WTC11 (cell line): ENCODE measurements at regions of chr10 and their contacts with region 1.

Region 1: GRCh38 chr10:109773288-109774120 is 149.8 kb downstream of the XPNPEP1 start:
- DNase-seq: no peak
- ATAC-seq: peak; percentile 91
- H3K4me3 Mint-ChIP-seq: no peak overlapping the region
- H3K27ac Mint-ChIP-seq: no peak overlapping the region
- H3K4me1 Mint-ChIP-seq: peaks cover 2% of the 10 kb centered on the region
- H3K27me3 Mint-ChIP-seq: no peaks in the 10 kb centered on the region
- CTCF ChIP-seq: peak; percentile 56

Region 2: DNA sequence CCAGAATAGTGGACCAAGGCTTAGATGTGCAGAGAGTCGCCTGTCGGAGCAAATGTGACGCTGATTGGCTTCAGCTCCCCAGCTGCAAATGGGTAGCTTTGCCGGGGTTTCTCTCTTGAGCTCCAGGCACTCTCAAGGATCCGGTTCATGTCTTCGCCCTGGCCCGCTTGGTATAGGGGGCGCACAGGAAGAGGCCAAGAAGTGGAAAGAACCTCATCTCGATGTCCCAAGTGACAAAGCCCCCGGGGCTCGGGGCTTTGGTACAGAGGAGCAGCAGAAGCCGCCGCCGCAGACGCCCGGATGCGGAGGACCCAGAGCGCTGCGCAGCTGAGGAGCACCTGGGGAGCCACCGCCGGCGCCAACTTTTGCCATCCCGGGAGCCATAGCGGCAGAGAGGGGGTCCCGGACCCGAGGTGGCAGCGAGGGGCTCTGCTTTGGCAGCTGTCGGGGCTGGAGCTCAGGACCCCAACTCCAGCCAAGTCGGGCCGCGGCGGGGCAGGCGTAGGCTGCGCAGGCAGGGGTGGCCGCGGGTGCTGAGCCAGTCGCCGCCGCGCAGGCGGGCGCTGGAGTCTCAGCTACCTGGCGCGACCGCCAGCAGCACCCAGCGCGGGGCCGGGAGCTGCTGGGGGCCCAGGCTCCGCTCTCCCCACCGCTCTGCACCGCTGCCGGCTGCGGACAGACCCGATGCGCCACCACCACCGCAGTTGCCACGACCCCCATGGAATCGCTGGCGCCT is 316.8 kb before region 1 on chr10:
- CTCF ChIA-PET with region 1: interaction called, 14 read pairs
- POLR2A ChIA-PET with region 1: no interaction called
- DNase-seq: peak; percentile 59
- ATAC-seq: peak; percentile 82
- H3K4me3 Mint-ChIP-seq: peak overlapping the region; percentile 75
- H3K27ac Mint-ChIP-seq: no peak overlapping the region
- H3K4me1 Mint-ChIP-seq: peaks cover 31% of the 10 kb centered on the region
- H3K27me3 Mint-ChIP-seq: peaks cover 62% of the 10 kb centered on the region
- CTCF ChIP-seq: no peak

Region 3: DNA sequence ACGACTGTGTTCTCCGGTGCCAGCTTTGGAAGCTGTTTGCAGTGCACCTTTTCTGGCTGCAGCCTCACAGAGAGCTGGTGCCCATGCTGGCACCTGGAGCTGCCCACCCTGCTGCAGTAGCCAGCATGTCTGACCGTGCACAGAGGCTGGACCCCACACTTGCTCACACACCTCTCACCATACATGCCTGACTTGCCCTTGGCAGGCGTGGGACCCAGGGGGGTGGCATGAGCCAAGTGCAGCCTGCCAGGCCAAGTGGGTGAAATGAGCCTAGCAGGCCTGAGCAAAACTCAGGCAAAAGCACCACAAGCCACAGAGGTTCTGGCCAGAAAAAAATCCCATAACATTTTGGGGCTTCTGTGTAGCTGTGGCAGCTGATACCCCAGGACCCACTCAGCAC is 109.0 kb before region 1 on chr10:
- CTCF ChIA-PET with region 1: interaction called, 11 read pairs
- POLR2A ChIA-PET with region 1: no interaction called
- DNase-seq: no peak
- ATAC-seq: no peak
- H3K4me3 Mint-ChIP-seq: no peak overlapping the region
- H3K27ac Mint-ChIP-seq: no peak overlapping the region
- H3K4me1 Mint-ChIP-seq: no peaks in the 10 kb centered on the region
- H3K27me3 Mint-ChIP-seq: no peaks in the 10 kb centered on the region; the same call in 1 of the 2 replicates
- CTCF ChIP-seq: no peak

Region 4: DNA sequence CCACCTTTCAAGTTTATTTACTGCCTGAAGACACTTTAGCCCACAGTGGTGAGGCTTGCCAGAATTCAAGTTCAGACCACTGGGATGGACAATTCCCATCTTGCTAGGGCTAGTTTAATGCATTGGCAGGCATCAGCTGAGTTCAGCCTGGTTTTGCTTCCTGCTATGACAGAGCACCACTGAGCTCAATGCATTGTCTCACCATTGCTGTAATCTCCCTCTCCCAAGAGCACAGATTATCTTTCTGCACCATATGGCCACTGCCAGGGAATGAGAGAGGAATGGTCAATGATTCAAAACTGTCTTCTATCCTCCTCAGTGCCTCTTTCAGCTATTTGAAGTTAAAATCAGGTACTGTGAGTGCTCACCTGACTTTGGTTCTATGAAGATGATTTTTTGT is 10.9 kb before region 1 on chr10:
- CTCF ChIA-PET with region 1: interaction called, 14 read pairs
- POLR2A ChIA-PET with region 1: no interaction called
- DNase-seq: no peak
- ATAC-seq: no peak
- H3K4me3 Mint-ChIP-seq: no peak overlapping the region
- H3K27ac Mint-ChIP-seq: no peak overlapping the region
- H3K4me1 Mint-ChIP-seq: no peaks in the 10 kb centered on the region
- H3K27me3 Mint-ChIP-seq: no peaks in the 10 kb centered on the region; the same call in 1 of the 2 replicates
- CTCF ChIP-seq: no peak

Region 5: DNA sequence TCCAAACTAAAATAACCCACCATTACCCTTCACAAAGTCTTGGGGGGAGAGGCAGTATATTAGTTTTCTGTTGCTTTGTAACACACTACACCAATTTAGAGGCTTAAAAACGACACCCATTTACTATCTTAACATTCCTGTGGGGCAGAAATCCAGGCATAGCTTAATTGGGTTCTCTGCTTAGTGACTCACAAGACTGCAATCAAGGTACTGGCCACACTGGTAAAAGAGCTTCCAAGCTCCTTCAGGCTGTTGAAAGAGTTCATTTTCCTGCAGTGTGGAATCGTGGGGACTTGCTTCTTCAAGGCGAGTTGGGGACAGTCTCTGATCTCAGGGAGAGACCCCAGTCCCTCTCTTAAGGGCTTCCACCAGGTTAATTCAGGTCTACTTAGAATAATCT is 10.7 kb after region 1 on chr10:
- CTCF ChIA-PET with region 1: interaction called, 26 read pairs
- POLR2A ChIA-PET with region 1: no interaction called
- DNase-seq: no peak
- ATAC-seq: no peak
- H3K4me3 Mint-ChIP-seq: no peak overlapping the region
- H3K27ac Mint-ChIP-seq: no peak overlapping the region
- H3K4me1 Mint-ChIP-seq: peaks cover 20% of the 10 kb centered on the region
- H3K27me3 Mint-ChIP-seq: peaks cover 17% of the 10 kb centered on the region
- CTCF ChIP-seq: no peak

Region 6: GRCh38 chr10:109838592-109839244 is 65.2 kb after region 1 on chr10:
- CTCF ChIA-PET with region 1: interaction called, 10 read pairs
- POLR2A ChIA-PET with region 1: no interaction called
- DNase-seq: peak; percentile 19
- ATAC-seq: peak; percentile 64
- H3K4me3 Mint-ChIP-seq: no peak overlapping the region
- H3K27ac Mint-ChIP-seq: no peak overlapping the region
- H3K4me1 Mint-ChIP-seq: 0 out of 2 replicates have a peak, but pooled peaks cover 3% of the 10 kb centered on the region
- H3K27me3 Mint-ChIP-seq: no peaks in the 10 kb centered on the region
- CTCF ChIP-seq: no peak

Region 7: GRCh38 chr10:109852475-109853037 is 79.1 kb after region 1 on chr10:
- CTCF ChIA-PET with region 1: interaction called, 20 read pairs
- POLR2A ChIA-PET with region 1: no interaction called
- DNase-seq: peak; percentile 86
- ATAC-seq: peak; percentile 95
- H3K4me3 Mint-ChIP-seq: no peak overlapping the region
- H3K27ac Mint-ChIP-seq: no peak overlapping the region
- H3K4me1 Mint-ChIP-seq: 0 out of 2 replicates have a peak, but pooled peaks cover 3% of the 10 kb centered on the region
- H3K27me3 Mint-ChIP-seq: peaks cover 4% of the 10 kb centered on the region
- CTCF ChIP-seq: peak; percentile 64

Region 8: DNA sequence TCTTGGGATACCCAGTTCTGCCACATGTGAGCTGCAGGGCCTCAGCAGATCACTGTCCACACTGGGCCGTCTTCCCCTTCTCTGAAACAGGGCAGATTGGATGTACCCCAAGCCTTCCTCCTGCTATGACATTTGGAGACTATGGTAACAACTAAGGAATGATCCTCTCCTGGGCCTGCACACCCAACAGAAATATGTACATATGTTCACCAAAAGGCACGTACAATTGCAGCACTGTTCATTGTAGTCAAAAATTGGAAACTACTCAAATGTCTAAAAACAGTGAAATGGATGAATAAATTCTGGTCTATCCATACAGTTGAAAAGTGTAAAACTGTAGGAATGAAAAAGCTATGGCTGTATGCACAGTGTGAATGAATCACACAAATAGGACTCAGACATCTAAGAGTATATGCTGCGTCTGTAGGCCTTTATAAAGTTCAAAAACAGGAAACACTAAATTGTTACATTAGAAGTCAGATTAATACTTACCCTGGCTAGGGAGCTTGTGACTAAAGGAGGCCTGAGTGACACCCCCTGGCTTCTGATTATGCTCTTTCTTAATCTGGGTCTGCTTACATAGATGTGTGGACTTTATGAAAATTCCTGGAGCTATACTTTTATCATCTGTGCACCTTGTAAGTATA is 165.9 kb after region 1 on chr10:
- CTCF ChIA-PET with region 1: no interaction called
- POLR2A ChIA-PET with region 1: no interaction called
- DNase-seq: no peak
- ATAC-seq: no peak
- H3K4me3 Mint-ChIP-seq: no peak overlapping the region
- H3K27ac Mint-ChIP-seq: no peak overlapping the region
- H3K4me1 Mint-ChIP-seq: peaks cover 41% of the 10 kb centered on the region
- H3K27me3 Mint-ChIP-seq: peaks cover 6% of the 10 kb centered on the region; the same call in 1 of the 2 replicates
- CTCF ChIP-seq: no peak